Transverse colon (tissue), 4 donors: ENCODE measurements at regions of chrX and their contacts with region 1.

Region 1: DNA sequence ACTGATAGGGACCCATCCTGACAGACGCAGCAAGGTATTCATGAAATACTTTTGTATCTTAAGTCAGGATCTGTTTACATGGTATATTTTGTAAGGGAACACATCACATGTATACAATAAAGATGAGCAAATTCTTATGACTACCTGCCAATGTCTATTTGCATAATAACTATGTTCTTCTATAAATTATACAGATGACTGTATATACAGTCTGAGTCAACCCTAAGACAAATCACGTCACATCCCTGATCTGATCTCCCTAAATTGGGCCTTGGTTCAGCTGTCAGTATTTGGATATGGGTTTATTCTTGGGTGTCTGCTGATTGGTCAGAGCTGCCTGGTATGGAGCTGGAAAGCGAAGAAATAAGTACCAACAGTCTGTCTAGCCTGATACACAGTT is 93.3 kb downstream of the SERPINA7 start:
- DNase-seq: no peak
- H3K4me3 ChIP-seq: no peak overlapping the region
- H3K27ac ChIP-seq: no peak overlapping the region
- H3K4me1 ChIP-seq: no peaks in the 10 kb centered on the region
- H3K27me3 ChIP-seq: no peaks in the 10 kb centered on the region
- CTCF ChIP-seq: no peak
- EP300 ChIP-seq: no peak
- POLR2A ChIP-seq: no peak

Region 2: DNA sequence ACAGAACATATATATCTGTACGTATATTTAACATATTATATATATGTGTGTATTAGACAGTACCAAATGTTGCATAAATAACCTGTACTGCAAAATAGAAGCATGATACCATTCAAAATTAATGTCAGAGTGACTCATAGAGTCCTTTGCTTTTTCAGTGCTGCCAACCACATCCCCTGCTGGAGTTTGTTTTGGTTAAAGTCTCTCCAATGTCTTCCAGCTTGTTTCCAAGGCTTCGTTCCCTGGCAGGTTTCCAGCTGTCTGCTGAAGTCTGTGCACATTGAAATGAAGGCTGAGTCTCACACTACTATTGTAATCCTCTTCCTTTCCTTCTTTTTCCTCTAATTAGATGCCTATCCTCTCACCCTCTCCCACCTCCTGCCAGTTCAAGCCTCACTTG is 108.0 kb before region 1 on chrX:
- in situ Hi-C with region 1: no loop called
- intact Hi-C with region 1: no loop called
- DNase-seq: no peak
- H3K4me3 ChIP-seq: no peak overlapping the region
- H3K27ac ChIP-seq: no peak overlapping the region
- H3K4me1 ChIP-seq: no peaks in the 10 kb centered on the region
- H3K27me3 ChIP-seq: no peaks in the 10 kb centered on the region
- CTCF ChIP-seq: no peak
- EP300 ChIP-seq: no peak
- POLR2A ChIP-seq: no peak

Region 3: GRCh38 chrX:105894721-105895120 is 50.5 kb before region 1 on chrX:
- in situ Hi-C with region 1: loop called in 1 of 4 experiments (anchors 10 kb)
- intact Hi-C with region 1: no loop called
- DNase-seq: no peak
- H3K4me3 ChIP-seq: no peak overlapping the region
- H3K27ac ChIP-seq: no peak overlapping the region
- H3K4me1 ChIP-seq: no peaks in the 10 kb centered on the region
- H3K27me3 ChIP-seq: no peaks in the 10 kb centered on the region
- CTCF ChIP-seq: no peak
- EP300 ChIP-seq: no peak
- POLR2A ChIP-seq: no peak